ENCODE measurements at regions of chr17 and their contacts with region 1.

Region 1: GRCh38 chr17:80195731-80196529 is 24.2 kb downstream of the SGSH start:
- DNase-seq: no peak
- ATAC-seq: peak; percentile 71
- H3K4me3 ChIP-seq: no peak overlapping the region
- H3K27ac ChIP-seq: no peak overlapping the region
- H3K4me1 ChIP-seq: no peaks in the 10 kb centered on the region
- H3K27me3 ChIP-seq: no peaks in the 10 kb centered on the region
- CTCF ChIP-seq: peak; percentile 87 to 96 (median 88)
- EP300 ChIP-seq: no peak
- POLR2A ChIP-seq: no peak
- RAD21 ChIP-seq: peak; percentile 94

Region 2: GRCh38 chr17:79951361-79952264 is 244.3 kb before region 1 on chr17:
- CTCF ChIA-PET with region 1: no interaction called
- POLR2A ChIA-PET with region 1: no interaction called
- RAD21 ChIA-PET with region 1: no interaction called
- SMC1A ChIA-PET with region 1: no interaction called
- in situ Hi-C with region 1: no loop called
- intact Hi-C with region 1: no loop called
- DNase-seq: no peak
- ATAC-seq: no peak
- H3K4me3 ChIP-seq: no peak overlapping the region
- H3K27ac ChIP-seq: no peak overlapping the region
- H3K4me1 ChIP-seq: no peaks in the 10 kb centered on the region
- H3K27me3 ChIP-seq: peaks cover 0 to 1% of the 10 kb centered on the region in 2 experiments; a peak in 1 of 4 replicates
- CTCF ChIP-seq: no peak
- EP300 ChIP-seq: no peak
- POLR2A ChIP-seq: no peak
- RAD21 ChIP-seq: no peak

Region 3: GRCh38 chr17:80045703-80046102 is 150.2 kb before region 1 on chr17:
- CTCF ChIA-PET with region 1: no interaction called
- POLR2A ChIA-PET with region 1: no interaction called
- RAD21 ChIA-PET with region 1: no interaction called
- SMC1A ChIA-PET with region 1: no interaction called
- in situ Hi-C with region 1: no loop called
- intact Hi-C with region 1: no loop called
- DNase-seq: no peak
- ATAC-seq: no peak
- H3K4me3 ChIP-seq: no peak overlapping the region
- H3K27ac ChIP-seq: no peak overlapping the region
- H3K4me1 ChIP-seq: no peaks in the 10 kb centered on the region
- H3K27me3 ChIP-seq: 0 out of 4 replicates have a peak, but pooled peaks cover 0 to 2% of the 10 kb centered on the region in 2 experiments
- CTCF ChIP-seq: no peak
- EP300 ChIP-seq: no peak
- POLR2A ChIP-seq: no peak
- RAD21 ChIP-seq: no peak

Region 4: DNA sequence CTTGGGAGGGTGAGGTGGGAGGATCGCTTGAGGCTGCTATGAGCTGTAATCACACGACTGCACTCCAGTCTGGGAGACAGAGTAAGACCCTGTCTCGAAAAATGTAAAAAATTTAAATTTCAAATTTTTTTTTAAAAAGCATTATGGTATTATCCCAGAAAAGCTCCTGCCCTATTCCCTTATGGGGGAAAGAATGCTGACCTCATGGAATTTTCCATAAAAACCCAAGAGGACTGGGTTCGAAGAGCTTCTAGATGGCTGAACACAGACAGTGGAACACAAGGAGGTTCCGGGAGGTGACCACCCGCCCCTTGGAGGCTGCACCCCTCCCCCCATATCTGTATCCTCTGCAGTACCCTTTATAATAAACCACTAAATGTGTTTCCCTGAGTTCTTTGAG is 53.0 kb before region 1 on chr17:
- CTCF ChIA-PET with region 1: no interaction called
- POLR2A ChIA-PET with region 1: no interaction called
- RAD21 ChIA-PET with region 1: no interaction called
- SMC1A ChIA-PET with region 1: no interaction called
- in situ Hi-C with region 1: no loop called
- intact Hi-C with region 1: no loop called
- DNase-seq: no peak
- ATAC-seq: no peak
- H3K4me3 ChIP-seq: 0 out of 2 replicates have a peak overlapping the region, but pooled peaks have one; percentile 0
- H3K27ac ChIP-seq: no peak overlapping the region
- H3K4me1 ChIP-seq: peaks cover 11% of the 10 kb centered on the region
- H3K27me3 ChIP-seq: no peaks in the 10 kb centered on the region
- CTCF ChIP-seq: no peak
- EP300 ChIP-seq: no peak
- POLR2A ChIP-seq: no peak
- RAD21 ChIP-seq: no peak

Region 5: DNA sequence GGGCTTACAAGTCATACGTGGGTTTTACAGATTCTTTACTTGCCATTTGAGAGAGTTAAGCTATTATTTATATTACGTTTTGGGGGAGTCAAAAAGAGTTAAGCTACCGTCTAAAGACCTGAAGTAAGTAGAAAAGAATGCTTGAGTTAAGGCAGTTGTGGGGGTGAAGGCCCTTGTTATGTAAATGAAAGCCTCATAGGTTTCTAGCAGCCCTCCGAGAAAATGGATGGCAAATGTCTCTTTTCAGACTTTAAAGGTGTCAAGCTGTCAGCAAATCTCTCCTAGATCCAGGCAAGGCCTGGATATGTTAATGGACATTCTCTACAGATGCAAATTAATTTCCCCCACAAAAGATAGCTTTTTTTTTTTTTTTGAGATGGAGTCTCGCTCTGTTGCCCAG is 41.8 kb before region 1 on chr17:
- CTCF ChIA-PET with region 1: no interaction called
- POLR2A ChIA-PET with region 1: no interaction called
- RAD21 ChIA-PET with region 1: no interaction called
- SMC1A ChIA-PET with region 1: no interaction called
- in situ Hi-C with region 1: no loop called
- intact Hi-C with region 1: no loop called
- DNase-seq: no peak
- ATAC-seq: no peak
- H3K4me3 ChIP-seq: no peak overlapping the region
- H3K27ac ChIP-seq: no peak overlapping the region
- H3K4me1 ChIP-seq: peaks cover 8% of the 10 kb centered on the region
- H3K27me3 ChIP-seq: no peaks in the 10 kb centered on the region
- CTCF ChIP-seq: no peak
- EP300 ChIP-seq: no peak
- POLR2A ChIP-seq: no peak
- RAD21 ChIP-seq: no peak

Region 6: DNA sequence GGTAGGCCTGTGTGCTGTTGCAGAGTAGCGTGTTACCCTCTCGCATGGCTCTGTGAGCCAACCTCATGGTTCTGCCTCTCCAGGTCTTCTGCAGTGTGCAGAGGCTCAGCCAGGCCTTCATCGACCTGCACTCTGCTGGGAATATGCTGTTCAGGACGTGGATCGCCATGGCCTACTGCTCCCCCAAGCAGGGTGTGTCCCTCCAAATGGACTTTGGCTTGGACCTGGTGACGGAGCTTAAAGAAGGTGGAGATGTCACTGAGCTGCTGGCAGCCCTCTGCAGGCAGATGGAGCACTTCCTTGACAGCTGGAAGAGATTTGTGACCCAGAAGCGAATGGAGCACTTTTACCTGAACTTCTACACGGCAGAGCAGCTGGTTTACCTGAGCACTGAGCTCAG is 143.2 kb after region 1 on chr17:
- CTCF ChIA-PET with region 1: interaction called, 5 read pairs
- POLR2A ChIA-PET with region 1: no interaction called
- RAD21 ChIA-PET with region 1: interaction called, 3 read pairs
- SMC1A ChIA-PET with region 1: no interaction called
- in situ Hi-C with region 1: no loop called
- intact Hi-C with region 1: loop called (anchors 10 kb)
- DNase-seq: no peak
- ATAC-seq: no peak
- H3K4me3 ChIP-seq: no peak overlapping the region
- H3K27ac ChIP-seq: no peak overlapping the region
- H3K4me1 ChIP-seq: no peaks in the 10 kb centered on the region
- H3K27me3 ChIP-seq: no peaks in the 10 kb centered on the region
- CTCF ChIP-seq: no peak
- EP300 ChIP-seq: no peak
- POLR2A ChIP-seq: no peak
- RAD21 ChIP-seq: no peak

Region 7: GRCh38 chr17:80364216-80364618 is 168.3 kb after region 1 on chr17:
- CTCF ChIA-PET with region 1: interaction called, 16 read pairs
- POLR2A ChIA-PET with region 1: no interaction called
- RAD21 ChIA-PET with region 1: no interaction called
- SMC1A ChIA-PET with region 1: interaction called, 3 read pairs
- in situ Hi-C with region 1: no loop called
- intact Hi-C with region 1: loop called (anchors 10 kb)
- DNase-seq: no peak
- ATAC-seq: no peak
- H3K4me3 ChIP-seq: no peak overlapping the region
- H3K27ac ChIP-seq: no peak overlapping the region
- H3K4me1 ChIP-seq: no peaks in the 10 kb centered on the region
- H3K27me3 ChIP-seq: no peaks in the 10 kb centered on the region
- CTCF ChIP-seq: peak; percentile 22 to 52 (median 29); a peak in 3 of 6 replicates
- EP300 ChIP-seq: no peak
- POLR2A ChIP-seq: no peak
- RAD21 ChIP-seq: peak; percentile 35; the same call in 1 of the 2 replicates